PC-3 (cell line): ENCODE measurements at regions of chr1 and their contacts with region 1.

Region 1: DNA sequence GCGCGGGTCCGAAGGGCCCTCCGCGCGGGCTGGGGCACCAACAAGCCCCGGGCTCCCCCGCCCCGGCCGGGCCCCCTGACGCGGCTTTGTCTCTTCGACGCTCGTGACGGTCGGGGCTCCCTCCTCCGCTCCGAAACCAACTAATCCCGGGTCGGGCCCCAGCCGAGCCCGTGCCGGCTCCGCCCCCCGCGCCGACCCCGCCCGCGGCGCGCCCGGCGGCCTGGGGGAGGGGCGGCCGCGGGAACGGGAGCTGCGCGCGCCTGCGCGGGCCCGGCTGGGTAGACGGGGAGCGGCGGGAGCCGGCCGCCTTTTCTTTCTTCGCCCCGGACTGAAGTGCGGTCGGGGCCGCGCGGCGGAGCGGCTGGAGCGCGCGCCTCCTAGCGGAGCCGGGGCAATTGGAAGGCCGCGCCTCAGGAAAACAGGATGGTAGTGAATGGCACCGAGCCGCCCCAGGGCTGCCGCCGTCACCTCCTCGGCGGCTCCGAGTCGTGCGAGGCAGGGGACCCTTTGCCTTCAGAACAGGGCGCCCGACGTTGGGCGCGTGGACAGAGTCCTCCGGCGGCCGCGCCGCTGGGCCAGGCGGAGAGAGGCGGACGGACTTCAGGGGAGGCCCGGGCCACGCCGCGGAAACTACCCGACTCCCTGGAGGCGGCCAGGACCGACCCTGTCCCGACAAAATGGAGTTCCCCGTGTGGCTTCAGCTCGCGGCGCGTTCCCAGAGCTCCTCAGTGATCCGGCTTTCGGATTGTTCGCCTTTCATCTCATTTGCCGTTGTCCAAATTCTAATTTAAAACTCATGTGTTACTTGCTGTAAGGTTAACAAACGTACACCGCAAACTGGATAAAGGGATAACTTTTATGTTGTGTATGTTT is at the start of gene TP53BP2:
- DNase-seq: peak; percentile 96
- ATAC-seq: peak; percentile 86
- H3K4me3 ChIP-seq: peak within 1 kb of the TSS; percentile 79
- H3K27ac ChIP-seq: peak within 1 kb of the TSS; percentile 89
- H3K4me1 ChIP-seq: peaks cover 27% of the 10 kb centered on the region
- H3K27me3 ChIP-seq: no peaks in the 10 kb centered on the region
- CTCF ChIP-seq: peak; percentile 71
- total RNA-seq, gene TP53BP2: 24.6 and 32.0 TPM in 2 replicates

Region 2: GRCh38 chr1:223771814-223772770 is 74.0 kb before region 1 on chr1:
- CTCF ChIA-PET with region 1: no interaction called
- POLR2A ChIA-PET with region 1: no interaction called
- intact Hi-C with region 1: loop called (anchors 10 kb)
- DNase-seq: peak; percentile 93
- ATAC-seq: peak; percentile 66
- H3K4me3 ChIP-seq: peak overlapping the region; percentile 38
- H3K27ac ChIP-seq: peak overlapping the region; percentile 86
- H3K4me1 ChIP-seq: peaks cover 72% of the 10 kb centered on the region
- H3K27me3 ChIP-seq: no peaks in the 10 kb centered on the region
- CTCF ChIP-seq: no peak

Region 3: GRCh38 chr1:223811634-223812415 is 34.2 kb before region 1 on chr1:
- CTCF ChIA-PET with region 1: interaction called, 5 read pairs
- POLR2A ChIA-PET with region 1: no interaction called
- intact Hi-C with region 1: loop called (anchors 1 kb)
- DNase-seq: peak; percentile 79
- ATAC-seq: peak; percentile 61
- H3K4me3 ChIP-seq: no peak overlapping the region
- H3K27ac ChIP-seq: no peak overlapping the region
- H3K4me1 ChIP-seq: peaks cover 28% of the 10 kb centered on the region
- H3K27me3 ChIP-seq: no peaks in the 10 kb centered on the region
- CTCF ChIP-seq: peak; percentile 85